ENCODE measurements at regions of chr5 and their contacts with region 1.

Region 1: DNA sequence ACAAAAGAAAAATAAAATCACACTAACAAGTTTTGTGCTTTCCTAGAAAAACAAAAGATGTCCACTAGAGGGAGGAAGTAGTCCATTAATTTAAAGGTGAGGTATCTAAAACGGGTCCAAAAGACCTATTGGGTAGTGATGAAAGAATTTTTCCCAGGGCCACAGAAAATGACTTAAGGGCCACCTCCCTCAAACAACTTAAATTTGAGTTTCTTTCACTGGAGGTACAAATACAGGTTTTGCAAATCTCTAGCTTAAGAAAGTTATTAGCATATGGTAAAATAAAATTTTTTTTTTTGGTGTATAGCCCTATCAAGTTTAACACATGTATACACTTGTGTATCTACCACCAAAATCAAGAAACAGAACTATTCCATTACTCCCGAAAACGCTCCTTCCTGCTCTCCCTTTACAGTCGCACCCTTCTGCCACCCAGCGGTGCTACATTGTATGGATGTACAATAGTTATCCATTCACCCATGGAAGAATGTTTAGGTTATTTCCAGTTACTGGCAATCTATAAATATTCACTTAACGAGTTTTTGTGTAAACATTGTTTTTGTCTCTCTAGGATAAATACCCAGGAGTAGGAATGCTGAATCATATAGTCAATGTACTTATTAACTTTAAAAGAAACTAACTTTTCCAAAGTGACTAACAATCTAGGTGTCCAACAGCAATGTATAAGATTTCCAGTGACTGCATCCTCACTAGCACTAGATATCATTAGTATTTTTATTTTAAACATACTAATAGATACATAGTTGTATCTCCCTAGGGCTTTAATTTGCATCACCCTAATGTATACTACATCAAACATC is 21.9 kb downstream of the DEPDC1B start:
- DNase-seq: peak in 2 of 9 donors; percentile 11 to 13
- ATAC-seq: peak; percentile 63
- H3K4me3 ChIP-seq: no peak overlapping the region
- H3K4me3 Mint-ChIP-seq: no peak overlapping the region
- H3K27ac ChIP-seq: no peak overlapping the region
- H3K27ac Mint-ChIP-seq: no peak overlapping the region
- H3K4me1 ChIP-seq: no peaks in the 10 kb centered on the region
- H3K4me1 Mint-ChIP-seq: peaks cover 0 to 20% (median 0%) of the 10 kb centered on the region in 7 donors
- H3K27me3 ChIP-seq: no peaks in the 10 kb centered on the region
- H3K27me3 Mint-ChIP-seq: no peaks in the 10 kb centered on the region

Region 2: DNA sequence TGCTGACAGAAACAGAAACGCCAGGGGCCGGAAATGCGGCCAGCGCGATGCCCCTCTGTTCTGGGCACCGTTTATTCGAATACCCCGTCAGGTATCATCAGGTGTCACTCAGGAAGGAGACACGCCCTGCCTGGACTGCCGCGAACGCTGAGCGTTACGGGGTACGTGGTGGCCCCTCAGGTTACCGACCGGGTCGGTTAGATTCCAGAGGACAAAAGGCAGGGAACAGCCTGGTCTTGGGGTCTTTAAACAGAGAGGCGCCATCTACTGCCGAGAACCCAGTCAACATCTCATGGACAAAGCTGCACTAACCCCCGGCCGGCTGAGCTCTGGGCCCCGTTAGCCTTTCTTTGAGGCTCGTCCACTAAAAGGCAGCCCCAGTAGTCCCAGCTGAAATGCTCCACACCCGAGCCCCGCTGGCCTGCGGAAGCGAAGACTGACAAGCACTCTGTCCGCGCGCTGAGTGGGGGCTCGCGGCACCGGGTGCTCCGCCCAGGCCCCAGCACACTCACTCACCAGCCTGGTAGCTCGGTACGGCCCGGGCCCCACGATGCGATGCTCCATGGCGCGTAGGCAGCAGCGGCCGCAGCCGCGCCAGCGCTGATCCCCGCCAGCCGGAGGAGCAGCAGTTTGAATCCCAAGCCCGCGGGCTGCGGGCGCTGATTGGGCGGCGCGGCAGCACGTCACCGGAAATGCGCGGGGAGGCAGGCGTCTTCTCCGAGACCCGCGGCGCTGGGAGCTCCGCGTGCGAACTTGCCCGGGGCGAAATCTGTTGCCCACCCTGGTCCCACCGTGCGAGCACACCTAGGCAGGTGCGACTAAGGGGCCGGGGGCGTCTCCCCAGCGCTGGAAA is 21.7 kb after region 1 on chr5 and contains the start of gene DEPDC1B:
- CTCF ChIA-PET with region 1: interaction called, 3 read pairs
- POLR2A ChIA-PET with region 1: no interaction called
- intact Hi-C with region 1: loop called in 1 of 2 experiments (anchors 2 kb)
- DNase-seq: peak; percentile 68 to 92 (median 82)
- ATAC-seq: peak; percentile 93
- H3K4me3 ChIP-seq: peak within 1 kb of the TSS; percentile 97
- H3K4me3 Mint-ChIP-seq: peak within 1 kb of the TSS; percentile 87 to 99 (median 92)
- H3K27ac ChIP-seq: peak within 1 kb of the TSS; percentile 68
- H3K27ac Mint-ChIP-seq: peak within 1 kb of the TSS in 8 of 9 donors; percentile 61 to 91 (median 76)
- H3K4me1 ChIP-seq: peaks cover 0 to 8% of the 10 kb centered on the region in 2 donors
- H3K4me1 Mint-ChIP-seq: peaks cover 6 to 39% (median 19%) of the 10 kb centered on the region in 7 donors
- H3K27me3 ChIP-seq: no peaks in the 10 kb centered on the region
- H3K27me3 Mint-ChIP-seq: peaks cover 0 to 35% (median 0%) of the 10 kb centered on the region in 5 donors
- total RNA-seq, gene DEPDC1B: 0.24 to 24.0 (median 0.31) TPM in 4 of 5 experiments, not detected in the other

Region 3: DNA sequence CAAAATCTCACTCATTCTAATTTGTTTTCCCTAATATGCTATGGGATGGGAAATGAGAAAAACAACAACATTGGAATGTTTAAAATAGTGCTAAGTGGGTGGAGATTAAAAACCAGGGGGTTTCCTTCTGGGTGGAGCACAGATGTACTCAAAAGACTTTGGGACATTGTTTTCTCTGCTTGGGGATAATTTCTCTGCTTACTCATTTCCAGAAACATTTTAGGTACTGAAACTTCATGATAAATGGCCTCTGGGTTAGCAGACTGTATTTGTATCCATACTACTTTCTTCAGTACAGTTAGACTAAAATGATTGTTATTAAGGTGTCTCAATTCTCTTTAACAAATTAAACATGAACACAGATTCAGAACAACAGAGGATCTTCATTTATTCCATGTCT is 148.6 kb after region 1 on chr5:
- CTCF ChIA-PET with region 1: no interaction called
- POLR2A ChIA-PET with region 1: no interaction called
- intact Hi-C with region 1: loop called in 1 of 2 experiments (anchors 5 kb)
- DNase-seq: no peak
- ATAC-seq: no peak
- H3K4me3 ChIP-seq: no peak overlapping the region
- H3K4me3 Mint-ChIP-seq: no peak overlapping the region
- H3K27ac ChIP-seq: no peak overlapping the region
- H3K27ac Mint-ChIP-seq: no peak overlapping the region
- H3K4me1 ChIP-seq: no peaks in the 10 kb centered on the region
- H3K4me1 Mint-ChIP-seq: peaks cover 0 to 23% (median 0%) of the 10 kb centered on the region in 7 donors
- H3K27me3 ChIP-seq: no peaks in the 10 kb centered on the region
- H3K27me3 Mint-ChIP-seq: peaks cover 0 to 5% (median 0%) of the 10 kb centered on the region in 5 donors

Region 4: GRCh38 chr5:60883229-60883628 is 205.2 kb after region 1 on chr5:
- CTCF ChIA-PET with region 1: no interaction called
- POLR2A ChIA-PET with region 1: no interaction called
- intact Hi-C with region 1: loop called in 1 of 2 experiments (anchors 1 kb)
- DNase-seq: no peak
- ATAC-seq: no peak
- H3K4me3 ChIP-seq: no peak overlapping the region
- H3K4me3 Mint-ChIP-seq: no peak overlapping the region
- H3K27ac ChIP-seq: no peak overlapping the region
- H3K27ac Mint-ChIP-seq: no peak overlapping the region
- H3K4me1 ChIP-seq: no peaks in the 10 kb centered on the region
- H3K4me1 Mint-ChIP-seq: no peaks in the 10 kb centered on the region
- H3K27me3 ChIP-seq: no peaks in the 10 kb centered on the region
- H3K27me3 Mint-ChIP-seq: no peaks in the 10 kb centered on the region

Region 5: DNA sequence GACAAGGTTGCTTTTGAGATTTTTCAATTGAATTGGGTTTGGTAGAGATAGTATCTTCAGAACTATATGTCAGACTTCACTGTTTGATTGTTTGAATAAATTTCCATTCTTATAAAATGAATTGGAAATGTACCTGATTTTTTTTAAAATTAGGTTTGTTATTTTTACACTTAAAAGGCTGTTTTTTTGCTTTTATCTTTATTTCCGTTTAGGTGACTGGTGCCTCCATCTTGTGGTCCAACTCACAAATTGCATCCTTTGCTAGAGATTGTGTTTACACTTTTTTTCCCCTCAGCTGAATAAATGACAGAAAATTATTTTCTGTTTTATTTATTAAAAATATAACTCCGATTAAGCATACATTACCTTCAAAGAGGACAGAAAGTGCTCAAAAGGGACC is 282.5 kb after region 1 on chr5:
- CTCF ChIA-PET with region 1: no interaction called
- POLR2A ChIA-PET with region 1: no interaction called
- intact Hi-C with region 1: loop called (anchors 1 kb)
- DNase-seq: peak in 5 of 9 donors; percentile 18 to 48 (median 39)
- ATAC-seq: peak; percentile 54
- H3K4me3 ChIP-seq: no peak overlapping the region
- H3K4me3 Mint-ChIP-seq: peak overlapping the region in 1 of 10 donors; percentile 9
- H3K27ac ChIP-seq: no peak overlapping the region
- H3K27ac Mint-ChIP-seq: peak overlapping the region in 1 of 9 donors; percentile 8
- H3K4me1 ChIP-seq: no peaks in the 10 kb centered on the region
- H3K4me1 Mint-ChIP-seq: peaks cover 0 to 30% (median 17%) of the 10 kb centered on the region in 7 donors
- H3K27me3 ChIP-seq: no peaks in the 10 kb centered on the region
- H3K27me3 Mint-ChIP-seq: no peaks in the 10 kb centered on the region

Region 6: GRCh38 chr5:61055434-61056006 is 377.5 kb after region 1 on chr5:
- CTCF ChIA-PET with region 1: no interaction called
- POLR2A ChIA-PET with region 1: no interaction called
- intact Hi-C with region 1: loop called in 1 of 2 experiments (anchors 5 kb)
- DNase-seq: peak in 5 of 9 donors; percentile 13 to 46 (median 30)
- ATAC-seq: peak; percentile 51
- H3K4me3 ChIP-seq: no peak overlapping the region
- H3K4me3 Mint-ChIP-seq: no peak overlapping the region
- H3K27ac ChIP-seq: no peak overlapping the region
- H3K27ac Mint-ChIP-seq: no peak overlapping the region
- H3K4me1 ChIP-seq: no peaks in the 10 kb centered on the region
- H3K4me1 Mint-ChIP-seq: peaks cover 0 to 3% (median 0%) of the 10 kb centered on the region in 7 donors
- H3K27me3 ChIP-seq: no peaks in the 10 kb centered on the region
- H3K27me3 Mint-ChIP-seq: no peaks in the 10 kb centered on the region